Stomach (tissue), 19 donors: ENCODE measurements at regions of chr5 and their contacts with region 1.

Region 1: GRCh38 chr5:168987543-168988300 is 313.2 kb downstream of the SLIT3 start:
- DNase-seq: peak; percentile 86 to 87
- H3K4me3 ChIP-seq: no peak overlapping the region
- H3K27ac ChIP-seq: no peak overlapping the region
- H3K4me1 ChIP-seq: peaks cover 6 to 25% (median 16%) of the 10 kb centered on the region in 4 donors
- H3K27me3 ChIP-seq: peaks cover 0 to 12% (median 0%) of the 10 kb centered on the region in 3 donors
- CTCF ChIP-seq: peak in 5 of 7 experiments; percentile 68 to 90 (median 89)
- EP300 ChIP-seq: no peak
- POLR2A ChIP-seq: no peak

Region 2: GRCh38 chr5:169197343-169197742 is 209.6 kb after region 1 on chr5:
- intact Hi-C with region 1: loop called (anchors 10 kb)
- DNase-seq: peak; percentile 69
- H3K4me3 ChIP-seq: no peak overlapping the region
- H3K27ac ChIP-seq: peak overlapping the region in 2 of 5 donors; percentile 37 to 38
- H3K4me1 ChIP-seq: peaks cover 0 to 11% (median 7%) of the 10 kb centered on the region in 4 donors
- H3K27me3 ChIP-seq: no peaks in the 10 kb centered on the region
- CTCF ChIP-seq: peak in 4 of 7 experiments; percentile 24 to 86 (median 62)
- EP300 ChIP-seq: no peak
- POLR2A ChIP-seq: no peak

Region 3: GRCh38 chr5:169302491-169303118 is 314.9 kb after region 1 on chr5:
- intact Hi-C with region 1: loop called (anchors 5 kb)
- DNase-seq: peak; percentile 74 to 93
- H3K4me3 ChIP-seq: no peak overlapping the region
- H3K27ac ChIP-seq: no peak overlapping the region
- H3K4me1 ChIP-seq: peaks cover 7 to 42% (median 29%) of the 10 kb centered on the region in 4 donors
- H3K27me3 ChIP-seq: peaks cover 0 to 74% (median 12%) of the 10 kb centered on the region in 3 donors
- CTCF ChIP-seq: peak in 5 of 7 experiments; percentile 74 to 91 (median 88)
- EP300 ChIP-seq: no peak
- POLR2A ChIP-seq: no peak

Region 4: GRCh38 chr5:169548315-169548714 is 560.6 kb after region 1 on chr5:
- intact Hi-C with region 1: loop called (anchors 10 kb)
- DNase-seq: peak in 1 of 2 donors; percentile 66
- H3K4me3 ChIP-seq: no peak overlapping the region
- H3K27ac ChIP-seq: no peak overlapping the region
- H3K4me1 ChIP-seq: no peaks in the 10 kb centered on the region
- H3K27me3 ChIP-seq: peaks cover 0 to 20% (median 0%) of the 10 kb centered on the region in 3 donors
- CTCF ChIP-seq: peak in 3 of 7 experiments; percentile 10 to 30 (median 15)
- EP300 ChIP-seq: no peak
- POLR2A ChIP-seq: no peak

Region 5: GRCh38 chr5:169577951-169578350 is 590.2 kb after region 1 on chr5:
- intact Hi-C with region 1: loop called (anchors 10 kb)
- DNase-seq: peak in 1 of 2 donors; percentile 40
- H3K4me3 ChIP-seq: no peak overlapping the region
- H3K27ac ChIP-seq: no peak overlapping the region
- H3K4me1 ChIP-seq: peaks cover 0 to 17% (median 5%) of the 10 kb centered on the region in 4 donors
- H3K27me3 ChIP-seq: peaks cover 0 to 9% (median 0%) of the 10 kb centered on the region in 3 donors
- CTCF ChIP-seq: no peak
- EP300 ChIP-seq: no peak
- POLR2A ChIP-seq: no peak